Ascending aorta (tissue), 2 donors: ENCODE measurements at regions of chr3 and their contacts with region 1.

Region 1: GRCh38 chr3:171809821-171810628 is at the start of gene PLD1:
- DNase-seq: peak; percentile 46 to 95
- H3K4me3 ChIP-seq: peak within 1 kb of the TSS; percentile 69 to 91
- H3K27ac ChIP-seq: peak within 1 kb of the TSS; percentile 82 to 93
- H3K4me1 ChIP-seq: peaks cover 5 to 7% of the 10 kb centered on the region in 2 donors
- H3K27me3 ChIP-seq: no peaks in the 10 kb centered on the region
- CTCF ChIP-seq: peak in 1 of 3 experiments; percentile 16
- total RNA-seq, gene PLD1: 8.8 TPM

Region 2: GRCh38 chr3:171772427-171773056 is 37.5 kb before region 1 on chr3:
- intact Hi-C with region 1: loop called (anchors 2 kb)
- DNase-seq: peak in 1 of 2 donors; percentile 74
- H3K4me3 ChIP-seq: peak overlapping the region in 1 of 2 donors; percentile 64
- H3K27ac ChIP-seq: peak overlapping the region in 1 of 2 donors; percentile 67
- H3K4me1 ChIP-seq: peaks cover 0 to 19% of the 10 kb centered on the region in 2 donors
- H3K27me3 ChIP-seq: no peaks in the 10 kb centered on the region
- CTCF ChIP-seq: peak; percentile 52 to 74 (median 62)

Region 3: GRCh38 chr3:171874251-171874679 is 64.2 kb after region 1 on chr3:
- intact Hi-C with region 1: loop called (anchors 5 kb)
- DNase-seq: peak in 1 of 2 donors; percentile 67
- H3K4me3 ChIP-seq: no peak overlapping the region
- H3K27ac ChIP-seq: peak overlapping the region; percentile 56 to 70
- H3K4me1 ChIP-seq: peaks cover 10 to 22% of the 10 kb centered on the region in 2 donors
- H3K27me3 ChIP-seq: no peaks in the 10 kb centered on the region
- CTCF ChIP-seq: no peak

Region 4: GRCh38 chr3:172256101-172256734 is 446.2 kb after region 1 on chr3:
- intact Hi-C with region 1: loop called (anchors 5 kb)
- DNase-seq: peak in 1 of 2 donors; percentile 83
- H3K4me3 ChIP-seq: no peak overlapping the region
- H3K27ac ChIP-seq: peak overlapping the region; percentile 89 to 91
- H3K4me1 ChIP-seq: peaks cover 25 to 54% of the 10 kb centered on the region in 2 donors
- H3K27me3 ChIP-seq: no peaks in the 10 kb centered on the region
- CTCF ChIP-seq: no peak

Region 5: GRCh38 chr3:172341482-172342059 is 531.5 kb after region 1 on chr3:
- intact Hi-C with region 1: loop called (anchors 10 kb)
- DNase-seq: no peak
- H3K4me3 ChIP-seq: no peak overlapping the region
- H3K27ac ChIP-seq: no peak overlapping the region
- H3K4me1 ChIP-seq: no peaks in the 10 kb centered on the region
- H3K27me3 ChIP-seq: no peaks in the 10 kb centered on the region
- CTCF ChIP-seq: peak; percentile 62 to 77 (median 68)